ENCODE measurements at regions of chr15 and their contacts with region 1.

Region 1: GRCh38 chr15:80058851-80059785 is at the start of gene ZFAND6:
- DNase-seq: peak; percentile 98
- ATAC-seq: peak; percentile 87
- H3K4me3 Mint-ChIP-seq: peak within 1 kb of the TSS; percentile 92
- H3K27ac Mint-ChIP-seq: peak within 1 kb of the TSS; percentile 96
- H3K4me1 Mint-ChIP-seq: peaks cover 28% of the 10 kb centered on the region
- H3K27me3 Mint-ChIP-seq: no peaks in the 10 kb centered on the region
- total RNA-seq, gene ZFAND6: 54.9 to 58.3 TPM

Region 2: GRCh38 chr15:79948095-79948695 is 110.9 kb before region 1 on chr15:
- POLR2A ChIA-PET with region 1: no interaction called
- DNase-seq: no peak
- ATAC-seq: peak; percentile 45
- H3K4me3 Mint-ChIP-seq: no peak overlapping the region
- H3K27ac Mint-ChIP-seq: no peak overlapping the region
- H3K4me1 Mint-ChIP-seq: peaks cover 11% of the 10 kb centered on the region
- H3K27me3 Mint-ChIP-seq: no peaks in the 10 kb centered on the region

Region 3: DNA sequence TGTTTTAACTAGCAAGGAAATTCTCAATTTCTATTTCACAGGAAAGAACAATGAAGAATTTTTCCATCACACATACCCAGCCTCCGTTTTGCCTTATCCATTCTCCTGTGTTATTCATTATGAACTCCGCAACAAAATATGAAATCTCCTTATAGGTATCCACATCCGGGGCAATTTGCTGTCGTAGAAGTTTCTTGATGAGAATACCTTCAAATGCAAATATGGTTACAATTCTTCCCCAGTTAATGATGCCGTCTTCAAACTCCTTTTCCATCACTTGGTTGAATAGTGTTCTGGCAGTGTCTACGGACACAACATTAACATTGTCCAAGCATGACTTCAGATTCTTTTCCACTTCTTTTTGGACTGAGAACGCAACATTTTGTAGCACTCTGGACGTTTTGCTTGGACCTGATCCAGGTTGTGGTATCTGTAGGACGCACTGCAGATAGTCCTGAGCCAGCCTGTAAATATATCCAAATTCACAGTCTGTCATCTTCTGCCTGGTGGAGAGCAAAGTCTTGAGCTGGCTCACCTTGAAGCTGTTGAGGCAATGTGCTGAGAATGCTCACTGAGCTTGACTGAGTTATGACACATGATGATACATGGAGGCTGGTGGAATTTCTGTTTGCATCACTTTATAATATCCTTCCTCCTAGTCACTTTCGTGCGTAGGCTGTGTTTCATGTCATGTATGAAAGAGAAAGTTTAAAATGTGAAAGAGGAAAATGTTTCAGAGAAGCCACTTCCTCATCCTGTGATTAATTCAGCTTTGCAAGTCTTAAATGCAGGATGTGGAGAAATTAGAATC is 88.3 kb before region 1 on chr15 and contains the start of gene BCL2A1:
- POLR2A ChIA-PET with region 1: interaction called, 10 read pairs
- DNase-seq: peak; percentile 48
- ATAC-seq: peak; percentile 75
- H3K4me3 Mint-ChIP-seq: peak within 1 kb of the TSS; percentile 95
- H3K27ac Mint-ChIP-seq: peak within 1 kb of the TSS; percentile 96
- H3K4me1 Mint-ChIP-seq: peaks cover 44% of the 10 kb centered on the region
- H3K27me3 Mint-ChIP-seq: no peaks in the 10 kb centered on the region
- total RNA-seq, gene BCL2A1: 33.6 to 34.6 TPM

Region 4: GRCh38 chr15:80010131-80010673 is 48.9 kb before region 1 on chr15:
- POLR2A ChIA-PET with region 1: no interaction called
- DNase-seq: no peak
- ATAC-seq: no peak
- H3K4me3 Mint-ChIP-seq: no peak overlapping the region
- H3K27ac Mint-ChIP-seq: no peak overlapping the region
- H3K4me1 Mint-ChIP-seq: no peaks in the 10 kb centered on the region
- H3K27me3 Mint-ChIP-seq: peaks cover 6% of the 10 kb centered on the region

Region 5: GRCh38 chr15:80072285-80072994 is 13.3 kb after region 1 on chr15:
- POLR2A ChIA-PET with region 1: interaction called, 39 read pairs
- DNase-seq: no peak
- ATAC-seq: peak; percentile 98
- H3K4me3 Mint-ChIP-seq: peak overlapping the region; percentile 85
- H3K27ac Mint-ChIP-seq: peak overlapping the region; percentile 80
- H3K4me1 Mint-ChIP-seq: peaks cover 24% of the 10 kb centered on the region
- H3K27me3 Mint-ChIP-seq: no peaks in the 10 kb centered on the region

Region 6: DNA sequence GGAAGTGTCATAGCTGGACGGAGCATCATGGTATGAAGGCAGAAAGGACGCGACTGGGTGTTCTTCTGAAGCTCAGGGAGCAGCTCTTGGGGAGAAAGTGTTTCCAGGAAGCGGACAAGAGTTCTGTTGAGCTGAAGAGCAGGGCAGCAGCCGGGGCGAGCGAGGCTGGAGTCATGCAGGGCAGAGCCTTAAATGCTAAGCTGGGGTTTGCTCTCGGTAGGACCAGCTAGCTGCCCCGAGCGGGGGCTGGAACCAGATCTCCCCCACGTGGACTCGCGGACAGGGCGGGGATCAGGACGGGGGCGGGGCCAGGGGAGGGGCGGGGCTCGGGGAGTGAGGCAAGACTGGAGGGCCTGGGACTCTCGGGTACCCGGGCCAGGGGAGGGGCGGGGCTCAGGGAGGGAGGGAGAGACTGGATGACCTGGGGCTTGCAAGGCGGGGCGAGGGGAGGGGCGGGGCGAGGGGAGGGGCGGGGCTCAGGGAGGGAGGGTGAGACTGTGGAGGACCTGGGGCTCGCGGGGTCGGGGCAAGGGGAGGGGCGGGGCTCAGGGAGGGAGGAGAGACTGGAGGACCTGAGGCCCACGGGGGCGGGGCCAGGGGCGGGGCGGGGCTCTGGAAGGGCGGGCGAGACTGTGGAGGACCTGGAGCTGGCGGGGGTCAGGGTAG is 93.2 kb after region 1 on chr15:
- POLR2A ChIA-PET with region 1: interaction called, 12 read pairs
- DNase-seq: peak; percentile 82
- ATAC-seq: peak; percentile 76
- H3K4me3 Mint-ChIP-seq: peak overlapping the region; percentile 94
- H3K27ac Mint-ChIP-seq: peak overlapping the region; percentile 49
- H3K4me1 Mint-ChIP-seq: peaks cover 24% of the 10 kb centered on the region
- H3K27me3 Mint-ChIP-seq: peaks cover 6% of the 10 kb centered on the region

Region 7: DNA sequence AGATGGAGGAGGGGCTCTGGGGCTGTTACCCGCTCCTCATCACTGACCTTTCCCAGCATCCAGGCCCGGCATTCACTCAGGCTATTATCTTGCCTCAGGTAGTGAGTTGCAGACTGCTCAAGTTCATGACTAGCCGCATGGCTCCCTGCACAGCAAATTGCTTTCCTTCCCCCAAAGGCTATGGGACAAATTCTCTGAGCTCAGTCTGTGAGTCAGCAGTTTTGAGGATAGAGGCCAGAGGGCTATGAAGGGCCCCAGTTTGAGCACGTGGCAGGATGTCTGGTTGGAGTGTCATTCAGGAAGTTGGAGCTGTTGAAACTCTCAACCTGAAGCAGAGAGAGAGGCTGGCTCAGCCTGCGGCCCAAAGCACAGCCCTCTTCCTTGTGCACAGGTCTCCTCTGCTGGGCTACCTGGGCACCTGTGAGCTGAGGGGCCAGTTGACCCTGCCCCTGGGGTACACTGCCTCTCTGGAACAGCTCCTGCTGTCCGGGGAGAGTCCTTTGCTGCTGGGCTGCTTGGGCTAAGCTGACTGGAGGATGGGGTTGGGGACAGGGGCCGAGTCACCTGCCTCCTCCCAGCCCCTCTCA is 101.5 kb after region 1 on chr15:
- POLR2A ChIA-PET with region 1: interaction called, 15 read pairs
- DNase-seq: peak; percentile 59
- ATAC-seq: peak; percentile 98
- H3K4me3 Mint-ChIP-seq: peak overlapping the region; percentile 42
- H3K27ac Mint-ChIP-seq: peak overlapping the region; percentile 89
- H3K4me1 Mint-ChIP-seq: peaks cover 20% of the 10 kb centered on the region
- H3K27me3 Mint-ChIP-seq: no peaks in the 10 kb centered on the region

Measured in activated naive CD8-positive, alpha-beta T cell treated with anti-CD3 and anti-CD28 coated beads, Interleukin-2, amount 10 ng/mL, durations not matched to agents 7 days and 5 days (primary cell).